ENCODE measurements at regions of chr6 and their contacts with region 1.

Region 1: GRCh38 chr6:34887753-34888513 is at the start of gene TAF11:
- DNase-seq: peak; percentile 96
- ATAC-seq: peak; percentile 89
- H3K4me3 Mint-ChIP-seq: peak within 1 kb of the TSS; percentile 100
- H3K27ac Mint-ChIP-seq: peak within 1 kb of the TSS; percentile 100
- H3K4me1 Mint-ChIP-seq: peaks cover 41% of the 10 kb centered on the region
- H3K27me3 Mint-ChIP-seq: no peaks in the 10 kb centered on the region
- total RNA-seq, gene TAF11: 28.7 to 32.3 TPM

Region 2: GRCh38 chr6:34526992-34527728 is 360.8 kb before region 1 on chr6:
- CTCF ChIA-PET with region 1: no interaction called
- POLR2A ChIA-PET with region 1: no interaction called
- intact Hi-C with region 1: loop called in 1 of 2 experiments (anchors 2 kb)
- DNase-seq: peak; percentile 98
- ATAC-seq: peak; percentile 100
- H3K4me3 Mint-ChIP-seq: no peak overlapping the region
- H3K27ac Mint-ChIP-seq: no peak overlapping the region
- H3K4me1 Mint-ChIP-seq: peaks cover 3% of the 10 kb centered on the region
- H3K27me3 Mint-ChIP-seq: no peaks in the 10 kb centered on the region

Region 3: GRCh38 chr6:34696739-34697543 is 191.0 kb before region 1 on chr6 and contains the start of gene ILRUN:
- CTCF ChIA-PET with region 1: no interaction called
- POLR2A ChIA-PET with region 1: no interaction called
- intact Hi-C with region 1: loop called in 1 of 2 experiments (anchors 1 kb)
- DNase-seq: peak; percentile 98
- ATAC-seq: peak; percentile 84
- H3K4me3 Mint-ChIP-seq: peak within 1 kb of the TSS; percentile 92
- H3K27ac Mint-ChIP-seq: peak within 1 kb of the TSS; percentile 99
- H3K4me1 Mint-ChIP-seq: peaks cover 45% of the 10 kb centered on the region
- H3K27me3 Mint-ChIP-seq: no peaks in the 10 kb centered on the region
- total RNA-seq, gene ILRUN: 56.2 to 66.9 TPM

Region 4: GRCh38 chr6:34912715-34913464 is 25.0 kb after region 1 on chr6:
- CTCF ChIA-PET with region 1: interaction called, 3 read pairs
- POLR2A ChIA-PET with region 1: no interaction called
- intact Hi-C with region 1: loop called (anchors 1 to 2 kb)
- DNase-seq: peak; percentile 62
- ATAC-seq: peak; percentile 96
- H3K4me3 Mint-ChIP-seq: no peak overlapping the region
- H3K27ac Mint-ChIP-seq: peak overlapping the region; percentile 51
- H3K4me1 Mint-ChIP-seq: peaks cover 31% of the 10 kb centered on the region
- H3K27me3 Mint-ChIP-seq: peaks cover 2% of the 10 kb centered on the region

Region 5: DNA sequence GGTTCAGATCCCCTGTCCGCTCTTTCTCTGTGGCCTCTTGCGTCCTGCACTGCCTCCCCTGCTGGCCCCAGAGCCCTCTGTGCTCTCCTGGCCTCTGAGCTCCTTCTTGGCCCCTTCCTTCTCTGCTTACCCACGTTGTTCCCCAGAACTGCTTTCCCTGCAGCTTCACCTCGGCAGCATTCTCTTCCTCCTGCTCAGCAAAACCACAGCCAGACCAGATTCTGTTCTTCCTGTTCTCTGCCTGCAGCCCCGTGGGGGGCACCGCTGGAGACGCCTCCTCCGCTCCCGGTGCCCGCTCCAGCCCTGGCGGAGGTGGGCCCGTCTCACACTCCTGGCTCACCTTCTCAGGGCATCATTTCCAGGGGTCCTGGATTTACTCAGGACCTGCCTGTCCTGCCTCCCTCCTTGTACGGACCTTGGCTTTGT is 193.5 kb after region 1 on chr6:
- CTCF ChIA-PET with region 1: no interaction called
- POLR2A ChIA-PET with region 1: no interaction called
- intact Hi-C with region 1: no loop called
- DNase-seq: no peak
- ATAC-seq: no peak
- H3K4me3 Mint-ChIP-seq: no peak overlapping the region
- H3K27ac Mint-ChIP-seq: no peak overlapping the region
- H3K4me1 Mint-ChIP-seq: no peaks in the 10 kb centered on the region
- H3K27me3 Mint-ChIP-seq: no peaks in the 10 kb centered on the region

Region 6: GRCh38 chr6:35452186-35453090 is 564.5 kb after region 1 on chr6 and contains the start of gene FANCE:
- CTCF ChIA-PET with region 1: no interaction called
- POLR2A ChIA-PET with region 1: no interaction called
- intact Hi-C with region 1: loop called in 1 of 2 experiments (anchors 2 kb)
- DNase-seq: peak; percentile 95
- ATAC-seq: peak; percentile 89
- H3K4me3 Mint-ChIP-seq: peak within 1 kb of the TSS; percentile 82
- H3K27ac Mint-ChIP-seq: peak within 1 kb of the TSS; percentile 47
- H3K4me1 Mint-ChIP-seq: peaks cover 30% of the 10 kb centered on the region
- H3K27me3 Mint-ChIP-seq: no peaks in the 10 kb centered on the region
- total RNA-seq, gene FANCE: 14.3 to 14.8 TPM

Measured in activated CD4-positive, alpha-beta T cell treated with anti-CD3 and anti-CD28 coated beads for 36 hours (primary cell).